ENCODE measurements at regions of chr7 and their contacts with region 1.

Region 1: DNA sequence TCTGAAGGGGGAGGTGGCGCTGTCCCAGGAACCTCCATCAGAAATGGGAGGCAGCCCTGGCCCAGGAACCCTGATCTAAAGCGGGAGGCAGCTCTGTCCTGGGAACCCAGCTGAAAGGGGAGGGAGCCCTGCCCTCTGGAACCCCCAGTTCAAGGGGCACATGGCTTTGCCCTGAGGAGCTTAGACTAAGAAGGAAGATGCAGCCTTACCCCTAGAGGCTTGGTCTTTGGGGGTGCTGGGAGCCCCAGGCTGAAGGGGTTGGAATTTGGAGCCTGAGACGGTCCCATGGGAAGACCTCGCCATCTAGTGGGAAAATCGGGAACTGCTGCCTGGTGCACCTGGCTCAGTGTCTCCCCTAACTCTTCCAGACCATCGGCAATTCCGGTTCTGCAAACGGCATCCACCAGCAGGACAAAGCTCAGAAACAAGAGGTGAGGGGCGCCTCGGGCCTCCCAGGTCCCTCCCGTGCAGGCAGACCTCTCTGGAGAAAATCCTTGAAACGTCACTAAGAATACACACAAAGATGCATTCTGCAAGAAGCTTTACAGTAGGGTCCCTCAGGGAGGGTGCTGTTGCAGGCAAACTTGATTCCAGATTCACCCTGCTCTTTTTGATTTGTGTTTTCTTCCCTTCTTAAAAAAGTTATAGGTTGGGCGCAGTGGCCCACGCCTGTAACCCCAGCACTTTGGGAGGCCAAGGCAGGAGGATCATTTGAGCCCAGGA is 52.4 kb upstream of the GTF2IRD1 start:
- DNase-seq: peak; percentile 69
- ATAC-seq: peak; percentile 84
- H3K4me3 Mint-ChIP-seq: no peak overlapping the region
- H3K27ac Mint-ChIP-seq: no peak overlapping the region
- H3K4me1 Mint-ChIP-seq: no peaks in the 10 kb centered on the region
- H3K27me3 Mint-ChIP-seq: no peaks in the 10 kb centered on the region
- CTCF ChIP-seq: no peak

Region 2: DNA sequence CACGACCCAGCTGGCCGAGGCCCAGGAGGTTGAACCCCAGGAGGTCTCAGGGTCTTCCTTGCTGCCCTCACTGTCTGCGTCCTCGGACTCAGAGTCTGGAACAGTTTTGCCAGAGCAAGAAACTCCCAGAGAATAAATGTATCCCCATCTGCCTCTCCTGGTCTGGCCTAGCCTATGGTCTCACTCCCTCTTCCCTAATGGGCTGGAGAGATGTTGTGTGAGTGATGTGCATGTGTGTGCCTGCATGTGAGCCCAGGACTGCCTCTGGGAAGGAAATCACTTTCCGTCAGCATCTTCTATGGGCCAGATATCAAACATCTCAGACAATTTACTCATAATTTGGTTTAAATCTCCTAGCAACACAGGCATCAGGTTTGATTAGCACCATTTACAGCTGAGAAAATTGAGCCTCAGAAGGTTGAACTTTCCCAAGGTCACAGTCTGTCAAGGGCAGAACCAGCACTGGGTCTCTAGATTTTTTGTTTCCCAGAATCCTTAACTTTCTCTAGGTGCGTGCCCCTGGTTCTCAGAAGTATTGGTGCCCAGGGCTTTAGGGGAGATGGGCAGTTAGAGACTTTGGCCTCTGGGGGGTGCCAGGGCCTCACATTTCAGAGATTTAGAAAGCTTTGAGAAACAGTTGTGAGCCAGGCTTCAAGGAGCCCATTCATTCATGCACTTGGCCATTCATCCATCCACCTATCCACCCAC is 535.4 kb before region 1 on chr7:
- CTCF ChIA-PET with region 1: no interaction called
- POLR2A ChIA-PET with region 1: no interaction called
- intact Hi-C with region 1: loop called (anchors 1 kb)
- DNase-seq: no peak
- ATAC-seq: peak; percentile 56
- H3K4me3 Mint-ChIP-seq: no peak overlapping the region
- H3K27ac Mint-ChIP-seq: no peak overlapping the region
- H3K4me1 Mint-ChIP-seq: no peaks in the 10 kb centered on the region
- H3K27me3 Mint-ChIP-seq: peaks cover 4% of the 10 kb centered on the region
- CTCF ChIP-seq: no peak

Region 3: GRCh38 chr7:74183613-74184450 is 217.5 kb before region 1 on chr7:
- CTCF ChIA-PET with region 1: interaction called, 16 read pairs
- POLR2A ChIA-PET with region 1: no interaction called
- intact Hi-C with region 1: no loop called
- DNase-seq: no peak
- ATAC-seq: peak; percentile 60
- H3K4me3 Mint-ChIP-seq: no peak overlapping the region
- H3K27ac Mint-ChIP-seq: peak overlapping the region; percentile 53
- H3K4me1 Mint-ChIP-seq: peaks cover 84% of the 10 kb centered on the region
- H3K27me3 Mint-ChIP-seq: no peaks in the 10 kb centered on the region
- CTCF ChIP-seq: no peak

Measured in activated B cell treated with CpG ODN at 0.5 μM for 24 hours (primary cell).